Left ventricle myocardium superior (tissue), 1 donor: ENCODE measurements at regions of chr4 and their contacts with region 1.

Region 1: DNA sequence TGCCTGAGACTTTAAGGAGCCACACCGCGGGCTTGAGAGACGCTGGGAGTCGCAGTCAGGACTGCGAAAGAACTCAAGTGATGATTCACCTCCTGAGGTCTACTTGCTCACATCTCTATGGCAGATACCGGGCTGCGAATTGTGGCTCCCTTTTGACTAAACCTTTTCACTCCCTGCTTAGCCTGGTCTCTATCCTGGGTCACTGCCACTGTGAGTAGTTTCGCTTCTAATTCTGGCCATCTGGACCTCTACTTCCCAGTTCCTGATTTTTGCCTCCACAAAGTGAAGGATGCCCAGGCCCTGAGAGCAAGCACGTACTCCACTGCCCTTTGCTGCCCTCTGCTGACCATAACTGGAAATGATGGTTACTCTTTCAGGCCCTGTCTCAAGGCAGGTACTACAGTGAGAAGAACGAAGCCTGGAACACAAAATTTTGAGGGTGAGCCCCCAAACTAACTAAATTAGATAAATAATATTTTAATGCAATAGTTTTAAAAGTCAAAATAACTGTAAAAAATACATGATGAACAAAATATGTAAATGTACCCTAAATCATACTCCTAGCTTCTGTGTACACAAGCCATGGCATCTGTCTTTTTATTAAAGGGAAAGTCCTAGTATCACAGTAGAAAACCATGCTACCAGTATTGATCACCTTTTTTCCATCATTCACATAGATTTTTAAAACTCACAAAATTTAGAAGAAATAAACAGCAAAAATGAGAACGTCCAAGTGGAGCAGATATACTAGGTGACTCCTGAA is 16.7 kb downstream of the MAD2L1 start:
- DNase-seq: peak; percentile 55
- ATAC-seq: peak; percentile 95

Region 2: GRCh38 chr4:119314356-119314755 is 735.6 kb before region 1 on chr4:
- intact Hi-C with region 1: loop called (anchors 10 kb)
- DNase-seq: no peak
- ATAC-seq: peak; percentile 83

Region 3: DNA sequence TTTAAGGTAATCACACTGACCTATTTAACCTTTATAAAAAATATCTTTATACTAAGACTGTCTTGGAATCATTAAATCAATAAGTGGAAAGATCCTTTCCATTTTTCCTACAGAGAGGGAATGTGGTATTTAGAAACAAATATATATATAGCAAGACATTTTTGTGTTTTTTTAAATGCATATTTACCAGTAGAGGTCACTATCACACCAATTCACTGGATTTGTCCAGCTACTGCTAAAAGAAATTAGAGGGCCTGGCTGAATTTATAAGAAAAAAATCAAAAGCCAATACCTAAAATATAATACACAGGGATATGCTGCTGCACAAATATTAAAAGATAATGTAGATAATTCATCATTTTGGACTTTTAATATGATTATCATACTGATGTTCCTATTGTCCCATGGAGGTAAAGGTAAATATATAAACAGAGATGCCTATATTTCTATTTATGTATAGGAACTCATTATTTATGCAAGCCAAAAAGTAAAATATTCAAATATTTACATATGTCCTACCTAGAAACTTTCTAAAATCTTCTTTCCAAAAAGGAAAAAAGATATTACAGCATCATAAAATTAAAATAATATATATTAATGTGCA is 490.8 kb before region 1 on chr4:
- intact Hi-C with region 1: loop called (anchors 10 kb)
- DNase-seq: no peak
- ATAC-seq: no peak

Region 4: DNA sequence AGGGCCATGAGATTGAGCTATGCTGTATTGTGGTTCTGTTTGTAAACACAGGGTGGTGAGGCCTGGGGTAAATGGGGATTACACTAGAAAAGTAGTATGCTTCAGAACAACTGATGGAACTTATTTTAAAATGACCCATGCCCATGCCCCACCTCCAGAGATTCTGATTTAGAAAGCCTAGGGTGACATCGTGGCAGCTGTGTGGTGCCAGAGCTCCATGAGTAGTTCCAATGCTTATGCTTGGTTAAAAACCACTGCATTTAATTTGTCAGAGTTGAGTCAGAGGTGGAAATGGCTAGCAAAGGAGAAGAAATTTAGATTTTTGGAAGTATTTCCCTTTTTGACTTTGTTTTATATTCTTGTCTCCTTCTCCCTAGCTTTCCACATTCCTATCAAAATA is 357.9 kb before region 1 on chr4:
- intact Hi-C with region 1: loop called (anchors 10 kb)
- DNase-seq: peak; percentile 18
- ATAC-seq: peak; percentile 75